ENCODE measurements at regions of chr3 and their contacts with region 1.

Region 1: GRCh38 chr3:183349421-183350157 is 78.8 kb downstream of the MCF2L2 start:
- DNase-seq: no peak
- H3K27ac ChIP-seq: no peak overlapping the region
- CTCF ChIP-seq: no peak

Region 2: GRCh38 chr3:182829761-182830405 is 519.7 kb before region 1 on chr3:
- CTCF ChIA-PET with region 1: no interaction called
- POLR2A ChIA-PET with region 1: no interaction called
- DNase-seq: peak; percentile 55
- H3K27ac ChIP-seq: no peak overlapping the region
- CTCF ChIP-seq: no peak

Region 3: GRCh38 chr3:183360971-183361624 is 11.5 kb after region 1 on chr3:
- CTCF ChIA-PET with region 1: no interaction called
- POLR2A ChIA-PET with region 1: no interaction called
- DNase-seq: no peak
- H3K27ac ChIP-seq: no peak overlapping the region
- CTCF ChIP-seq: no peak

Region 4: DNA sequence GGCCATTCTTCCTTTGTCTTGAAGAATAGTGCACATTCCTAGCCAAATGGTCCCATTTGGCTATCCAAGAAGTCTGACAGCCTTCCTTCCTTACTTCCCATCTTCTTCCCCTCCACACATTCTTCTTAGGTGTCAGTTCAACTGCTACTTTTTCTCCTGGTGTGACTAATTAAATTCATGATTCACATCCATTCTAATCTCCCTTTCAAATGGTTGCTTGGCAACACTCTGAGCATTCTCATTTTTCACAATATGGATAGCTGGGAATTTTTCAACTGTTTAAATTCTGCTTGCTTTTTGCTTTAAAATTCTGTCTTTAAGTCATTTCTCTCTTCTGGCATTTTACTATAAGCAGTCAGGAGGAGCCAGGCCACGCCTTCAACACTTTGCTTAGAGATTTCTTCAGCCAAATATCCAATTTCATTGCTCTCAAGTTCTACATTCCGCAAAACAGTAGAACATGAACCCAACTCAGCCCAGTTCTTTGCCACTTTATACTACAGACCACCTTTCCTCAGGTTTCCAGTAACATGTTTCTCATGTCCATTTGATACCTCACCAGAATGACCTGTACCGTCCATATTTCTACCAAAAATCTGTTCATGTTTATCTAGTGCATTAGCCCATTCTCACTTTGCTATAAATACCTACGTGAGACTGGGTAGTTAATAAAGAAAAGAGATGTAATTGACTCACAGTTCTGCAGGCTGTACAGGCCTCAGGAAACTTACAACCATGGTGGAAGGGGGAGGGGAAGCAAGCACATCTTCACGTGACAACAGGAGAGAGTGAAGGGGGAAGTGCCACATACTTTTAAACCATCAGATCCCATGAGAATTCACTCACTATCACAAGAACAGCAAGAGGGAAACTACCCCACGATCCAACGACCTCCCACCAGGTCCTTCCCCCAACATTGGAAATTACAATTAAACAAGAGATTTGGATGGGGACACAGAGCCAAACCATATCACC is 110.8 kb after region 1 on chr3:
- CTCF ChIA-PET with region 1: no interaction called
- POLR2A ChIA-PET with region 1: interaction called, 10 read pairs
- DNase-seq: peak; percentile 53
- H3K27ac ChIP-seq: no peak overlapping the region
- CTCF ChIP-seq: no peak